MCF 10A (cell line): ENCODE measurements at regions of chr7 and their contacts with region 1.

Region 1: GRCh38 chr7:98841179-98841997 is 28.4 kb downstream of the TMEM130 start:
- DNase-seq: peak; percentile 88
- H3K4me3 Mint-ChIP-seq: no peak overlapping the region
- H3K27ac Mint-ChIP-seq: no peak overlapping the region
- H3K4me1 Mint-ChIP-seq: peaks cover 10% of the 10 kb centered on the region
- H3K27me3 Mint-ChIP-seq: peaks cover 11% of the 10 kb centered on the region
- CTCF ChIP-seq: peak; percentile 93

Region 2: GRCh38 chr7:98294796-98295382 is 546.5 kb before region 1 on chr7:
- CTCF ChIA-PET with region 1: interaction called, 10 read pairs
- POLR2A ChIA-PET with region 1: interaction called, 3 read pairs
- intact Hi-C with region 1: no loop called
- DNase-seq: peak; percentile 72
- H3K4me3 Mint-ChIP-seq: no peak overlapping the region
- H3K27ac Mint-ChIP-seq: peak overlapping the region; percentile 79
- H3K4me1 Mint-ChIP-seq: no peaks in the 10 kb centered on the region
- H3K27me3 Mint-ChIP-seq: no peaks in the 10 kb centered on the region
- CTCF ChIP-seq: peak; percentile 84

Region 3: GRCh38 chr7:98434095-98434494 is 407.3 kb before region 1 on chr7:
- CTCF ChIA-PET with region 1: interaction called, 515 read pairs
- POLR2A ChIA-PET with region 1: interaction called, 3 read pairs
- intact Hi-C with region 1: loop called (anchors 1 kb)
- DNase-seq: no peak
- H3K4me3 Mint-ChIP-seq: no peak overlapping the region
- H3K27ac Mint-ChIP-seq: no peak overlapping the region
- H3K4me1 Mint-ChIP-seq: peaks cover 6% of the 10 kb centered on the region
- H3K27me3 Mint-ChIP-seq: peaks cover 17% of the 10 kb centered on the region
- CTCF ChIP-seq: no peak

Region 4: DNA sequence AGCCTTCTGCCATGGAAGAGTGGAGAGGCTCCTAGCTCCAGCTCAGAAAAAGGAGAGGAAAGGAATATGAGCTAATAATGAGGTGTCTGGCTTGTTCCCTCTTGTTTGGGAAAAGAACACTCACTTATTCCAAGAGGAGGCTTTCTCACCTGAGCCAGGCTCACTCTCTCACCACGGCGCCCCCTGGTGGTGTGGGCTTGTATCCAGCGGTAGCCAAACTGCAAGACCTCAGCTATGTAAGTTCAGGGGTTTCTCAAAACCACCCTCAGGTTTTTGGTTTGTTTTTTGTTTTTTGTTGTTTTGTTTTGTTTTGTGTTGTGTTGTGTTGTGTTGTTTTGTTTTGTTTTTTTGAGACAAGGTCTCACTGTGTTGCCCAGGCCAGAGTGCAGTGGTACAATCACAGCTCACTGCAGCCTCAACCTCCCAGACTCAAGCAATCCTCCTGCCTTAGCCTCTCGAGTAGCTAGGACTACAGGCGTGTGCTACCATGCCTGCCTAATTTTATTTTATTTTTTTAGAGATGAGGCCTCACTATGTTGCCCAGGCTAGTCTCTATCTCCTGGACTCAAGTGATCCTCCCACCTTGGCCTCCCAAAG is 95.6 kb before region 1 on chr7:
- CTCF ChIA-PET with region 1: interaction called, 28 read pairs
- POLR2A ChIA-PET with region 1: no interaction called
- intact Hi-C with region 1: loop called (anchors 2 kb)
- DNase-seq: peak; percentile 81
- H3K4me3 Mint-ChIP-seq: no peak overlapping the region
- H3K27ac Mint-ChIP-seq: no peak overlapping the region
- H3K4me1 Mint-ChIP-seq: no peaks in the 10 kb centered on the region
- H3K27me3 Mint-ChIP-seq: peaks cover 22% of the 10 kb centered on the region
- CTCF ChIP-seq: peak; percentile 72

Region 5: DNA sequence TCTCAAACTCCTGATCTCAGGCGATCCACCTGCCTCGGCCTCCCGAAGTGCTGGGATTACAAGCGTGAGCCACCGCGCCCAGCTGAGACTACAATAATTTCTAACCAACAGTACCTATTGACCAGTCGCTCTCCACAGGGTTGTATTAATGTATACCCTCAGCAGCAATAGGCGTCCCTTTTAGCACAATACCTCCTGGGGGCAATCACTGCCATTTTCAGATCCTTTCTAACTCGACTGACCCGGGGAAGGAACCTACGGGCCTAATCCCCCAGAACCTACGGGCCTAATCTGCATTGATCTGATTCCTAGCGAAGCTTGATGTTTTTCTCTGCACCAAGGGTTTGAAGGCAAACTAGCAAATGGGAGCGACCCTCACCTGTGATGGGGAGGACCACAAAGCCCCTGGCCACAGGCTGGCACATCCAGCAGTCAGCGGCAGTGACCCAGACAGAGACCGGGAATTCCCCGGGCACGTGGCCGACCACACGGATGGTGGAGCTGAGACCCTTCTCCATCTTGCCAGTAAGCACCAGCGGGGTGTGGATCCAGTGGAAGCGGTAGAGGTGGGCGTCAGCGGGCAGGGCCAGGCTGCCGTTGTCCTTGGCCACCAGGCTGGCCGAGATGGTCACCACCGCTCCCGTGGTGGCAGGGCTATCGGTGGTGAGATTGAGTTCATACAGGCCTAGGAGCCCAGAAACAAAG is 21.5 kb after region 1 on chr7:
- CTCF ChIA-PET with region 1: interaction called, 10 read pairs
- POLR2A ChIA-PET with region 1: no interaction called
- intact Hi-C with region 1: no loop called
- DNase-seq: no peak
- H3K4me3 Mint-ChIP-seq: no peak overlapping the region
- H3K27ac Mint-ChIP-seq: no peak overlapping the region
- H3K4me1 Mint-ChIP-seq: no peaks in the 10 kb centered on the region
- H3K27me3 Mint-ChIP-seq: peaks cover 57% of the 10 kb centered on the region
- CTCF ChIP-seq: no peak